Common myeloid progenitor, CD34-positive (primary cell): ENCODE measurements at regions of chr3 and their contacts with region 1.

Region 1: DNA sequence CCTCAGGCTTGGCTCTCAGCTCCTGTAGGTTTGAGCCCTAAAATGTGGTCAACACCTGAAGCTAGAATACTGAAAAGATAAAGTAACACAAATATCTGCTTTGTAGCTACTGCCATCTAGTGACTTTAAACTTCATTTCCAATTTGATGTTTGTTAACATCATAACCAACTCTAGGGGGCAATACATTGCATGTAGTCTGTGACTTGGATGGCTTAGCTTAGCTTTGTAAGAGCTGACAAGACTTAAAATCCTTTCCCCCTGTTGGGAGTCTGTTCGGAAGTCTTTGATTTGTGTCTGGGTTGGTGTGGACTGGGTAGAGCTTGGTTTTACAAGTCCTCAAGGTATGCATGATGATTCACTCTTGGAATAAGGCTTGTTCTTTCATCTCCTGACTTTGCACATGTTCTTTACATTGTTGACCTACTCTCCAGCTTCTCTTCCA is 51.7 kb downstream of the SCN11A start:
- DNase-seq: peak; percentile 53 to 75 (median 74)
- H3K4me3 ChIP-seq: no peak overlapping the region
- H3K27ac ChIP-seq: no peak overlapping the region
- H3K4me1 ChIP-seq: no peaks in the 10 kb centered on the region
- H3K27me3 ChIP-seq: no peaks in the 10 kb centered on the region

Region 2: DNA sequence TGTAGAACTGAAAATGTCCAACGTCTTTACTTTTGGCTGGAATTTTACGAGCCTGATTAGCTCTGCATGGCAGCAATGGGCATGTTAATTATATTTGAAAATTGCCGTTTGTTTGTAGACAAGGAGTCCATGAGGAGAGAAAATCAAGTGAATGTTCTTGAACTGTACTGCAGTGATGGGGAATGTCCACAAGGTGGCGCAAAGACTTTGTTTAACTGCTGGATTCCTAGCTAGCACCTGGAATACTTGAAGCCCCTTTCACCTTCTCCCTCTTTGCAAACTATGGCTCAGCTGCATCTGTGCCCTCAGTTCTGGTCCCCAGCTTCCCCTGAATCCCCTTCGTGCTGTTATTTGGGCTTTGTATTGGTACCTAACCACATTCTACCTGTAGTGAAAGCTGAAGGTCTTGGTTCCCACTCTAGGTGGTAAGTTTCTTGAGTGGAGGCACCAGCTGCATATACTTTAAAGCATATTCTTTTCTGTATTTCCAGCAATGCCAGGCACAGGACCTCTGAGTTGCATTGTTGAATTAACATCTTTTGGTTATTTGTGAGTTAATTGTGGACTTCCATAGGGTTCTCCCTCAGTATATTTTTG is 478.5 kb before region 1 on chr3:
- CTCF ChIA-PET with region 1: interaction called, 32 read pairs
- POLR2A ChIA-PET with region 1: no interaction called
- DNase-seq: peak; percentile 75 to 84 (median 79)
- H3K4me3 ChIP-seq: no peak overlapping the region
- H3K27ac ChIP-seq: no peak overlapping the region
- H3K4me1 ChIP-seq: peaks cover 0 to 15% (median 1%) of the 10 kb centered on the region in 4 experiments
- H3K27me3 ChIP-seq: no peaks in the 10 kb centered on the region

Region 3: GRCh38 chr3:38651154-38651789 is 348.8 kb before region 1 on chr3:
- CTCF ChIA-PET with region 1: interaction called, 13 read pairs
- POLR2A ChIA-PET with region 1: no interaction called
- DNase-seq: peak; percentile 63 to 78 (median 75)
- H3K4me3 ChIP-seq: peak overlapping the region in 2 of 7 experiments; percentile 25 to 54
- H3K27ac ChIP-seq: no peak overlapping the region
- H3K4me1 ChIP-seq: peaks cover 0 to 19% (median 16%) of the 10 kb centered on the region in 4 experiments
- H3K27me3 ChIP-seq: peaks cover 4 to 51% (median 35%) of the 10 kb centered on the region in 5 experiments

Region 4: GRCh38 chr3:38738630-38739395 is 261.2 kb before region 1 on chr3:
- CTCF ChIA-PET with region 1: interaction called, 20 read pairs
- POLR2A ChIA-PET with region 1: no interaction called
- DNase-seq: peak; percentile 28 to 65 (median 55)
- H3K4me3 ChIP-seq: no peak overlapping the region
- H3K27ac ChIP-seq: no peak overlapping the region
- H3K4me1 ChIP-seq: no peaks in the 10 kb centered on the region
- H3K27me3 ChIP-seq: no peaks in the 10 kb centered on the region

Region 5: DNA sequence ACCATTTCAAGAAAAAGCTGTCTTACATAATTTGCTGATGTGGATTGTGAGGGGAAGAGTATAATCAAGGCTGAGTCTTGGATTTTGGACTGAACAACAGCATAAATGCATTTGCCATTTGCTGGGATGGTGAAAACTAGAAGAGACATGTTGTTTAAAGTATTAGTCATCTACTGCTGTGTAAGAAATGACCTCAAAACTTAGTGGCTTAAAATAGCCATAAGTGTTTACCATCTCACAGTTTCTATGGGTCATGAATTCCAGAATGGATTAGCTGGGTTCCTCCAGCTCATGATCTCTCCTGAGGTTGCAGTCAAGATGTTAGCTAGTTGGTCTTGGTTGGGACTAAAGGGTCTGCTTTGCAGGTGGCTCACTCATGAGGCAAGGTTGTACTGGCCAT is 14.4 kb before region 1 on chr3:
- CTCF ChIA-PET with region 1: interaction called, 10 read pairs
- POLR2A ChIA-PET with region 1: no interaction called
- DNase-seq: no peak
- H3K4me3 ChIP-seq: no peak overlapping the region
- H3K27ac ChIP-seq: no peak overlapping the region
- H3K4me1 ChIP-seq: peaks cover 0 to 8% (median 3%) of the 10 kb centered on the region in 4 experiments
- H3K27me3 ChIP-seq: peaks cover 0 to 4% (median 0%) of the 10 kb centered on the region in 5 experiments

Region 6: GRCh38 chr3:39011191-39011736 is 11.2 kb after region 1 on chr3:
- CTCF ChIA-PET with region 1: interaction called, 13 read pairs
- POLR2A ChIA-PET with region 1: no interaction called
- DNase-seq: peak in 2 of 3 donors; percentile 50 to 56
- H3K4me3 ChIP-seq: no peak overlapping the region
- H3K27ac ChIP-seq: peak overlapping the region in 1 of 2 experiments; percentile 22
- H3K4me1 ChIP-seq: peaks cover 0 to 20% (median 9%) of the 10 kb centered on the region in 4 experiments
- H3K27me3 ChIP-seq: no peaks in the 10 kb centered on the region

Region 7: GRCh38 chr3:39029556-39029955 is 29.5 kb after region 1 on chr3:
- CTCF ChIA-PET with region 1: interaction called, 11 read pairs
- POLR2A ChIA-PET with region 1: no interaction called
- DNase-seq: no peak
- H3K4me3 ChIP-seq: no peak overlapping the region
- H3K27ac ChIP-seq: no peak overlapping the region
- H3K4me1 ChIP-seq: no peaks in the 10 kb centered on the region
- H3K27me3 ChIP-seq: no peaks in the 10 kb centered on the region

Region 8: DNA sequence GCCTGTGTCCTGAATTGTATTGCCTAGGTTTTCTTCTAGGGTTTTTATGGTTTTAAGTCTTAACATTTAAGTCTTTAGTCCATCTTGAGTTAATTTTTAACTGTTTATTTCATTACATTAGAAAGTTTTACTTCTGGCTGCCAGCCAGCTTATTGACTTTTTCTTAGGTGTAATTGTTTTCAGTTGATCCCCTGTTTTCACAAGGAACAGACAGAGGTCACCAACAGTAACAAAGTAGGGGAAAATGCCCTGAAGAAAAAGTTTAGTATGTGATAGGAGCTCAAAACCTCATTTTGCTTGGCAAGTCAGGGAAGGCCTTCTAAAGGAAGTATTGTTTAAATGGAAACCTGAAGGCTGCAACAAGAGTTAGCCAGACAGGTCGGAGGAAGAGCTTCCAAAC is 62.2 kb after region 1 on chr3:
- CTCF ChIA-PET with region 1: no interaction called
- POLR2A ChIA-PET with region 1: no interaction called
- DNase-seq: no peak
- H3K4me3 ChIP-seq: no peak overlapping the region
- H3K27ac ChIP-seq: no peak overlapping the region
- H3K4me1 ChIP-seq: peaks cover 0 to 8% (median 3%) of the 10 kb centered on the region in 4 experiments
- H3K27me3 ChIP-seq: no peaks in the 10 kb centered on the region

Region 9: GRCh38 chr3:39302178-39302577 is 302.1 kb after region 1 on chr3:
- CTCF ChIA-PET with region 1: no interaction called
- POLR2A ChIA-PET with region 1: no interaction called
- DNase-seq: no peak
- H3K4me3 ChIP-seq: no peak overlapping the region
- H3K27ac ChIP-seq: no peak overlapping the region
- H3K4me1 ChIP-seq: no peaks in the 10 kb centered on the region
- H3K27me3 ChIP-seq: no peaks in the 10 kb centered on the region

Region 10: DNA sequence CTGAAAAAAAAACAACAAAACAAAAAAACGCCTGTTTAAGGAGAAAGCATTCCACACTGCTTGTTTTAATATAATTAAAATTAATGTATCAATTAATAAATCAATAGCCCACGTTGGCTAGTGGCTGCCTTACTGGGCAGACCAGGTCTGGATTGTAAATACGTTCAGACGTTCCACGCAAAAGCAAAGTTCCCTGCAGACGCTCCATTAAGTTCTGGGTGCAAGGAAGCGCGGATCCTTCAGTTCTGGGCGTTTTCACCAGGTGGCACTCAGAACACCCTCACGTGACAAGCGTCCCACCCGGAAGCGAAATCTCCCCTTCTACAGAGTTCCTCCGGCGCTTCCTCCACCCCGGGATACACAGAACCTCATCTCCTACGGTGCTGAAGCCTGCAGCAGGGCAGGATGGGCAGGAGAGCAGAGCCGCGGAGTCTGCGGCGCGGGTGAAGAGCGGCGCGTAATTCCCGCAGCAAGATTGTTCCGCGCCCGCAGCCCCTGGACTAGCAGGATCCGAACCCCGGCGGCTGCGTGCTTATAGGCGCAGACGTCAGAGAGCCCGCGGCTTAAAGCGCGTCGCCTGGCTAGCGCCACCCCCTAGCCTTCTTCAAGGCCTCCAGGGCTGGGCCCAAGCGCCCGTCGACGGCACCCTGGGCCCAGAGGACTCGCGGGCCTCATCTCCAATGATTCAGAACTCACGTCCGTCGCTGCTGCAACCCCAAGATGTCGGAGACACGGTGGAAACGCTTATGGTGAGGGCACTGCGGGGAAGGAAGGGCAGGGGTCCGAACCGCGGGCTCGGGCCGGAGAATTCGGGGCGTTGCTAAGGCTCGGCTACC is 383.2 kb after region 1 on chr3 and contains the start of gene SLC25A38:
- CTCF ChIA-PET with region 1: no interaction called
- POLR2A ChIA-PET with region 1: no interaction called
- DNase-seq: peak; percentile 89 to 95 (median 94)
- H3K4me3 ChIP-seq: peak within 1 kb of the TSS; percentile 76 to 95 (median 85)
- H3K27ac ChIP-seq: peak within 1 kb of the TSS; percentile 72 to 91
- H3K4me1 ChIP-seq: peaks cover 0 to 39% (median 29%) of the 10 kb centered on the region in 4 experiments
- H3K27me3 ChIP-seq: no peaks in the 10 kb centered on the region